ENCODE measurements at regions of chr14 and their contacts with region 1.

Region 1: GRCh38 chr14:63852817-63853731 is at the start of gene SYNE2:
- DNase-seq: peak; percentile 84
- H3K4me3 Mint-ChIP-seq: peak within 1 kb of the TSS; percentile 97
- H3K27ac Mint-ChIP-seq: peak within 1 kb of the TSS; percentile 91
- H3K4me1 Mint-ChIP-seq: peaks cover 44% of the 10 kb centered on the region
- H3K27me3 Mint-ChIP-seq: peaks cover 10% of the 10 kb centered on the region
- total RNA-seq, gene SYNE2: 77.7 to 82.4 TPM

Region 2: DNA sequence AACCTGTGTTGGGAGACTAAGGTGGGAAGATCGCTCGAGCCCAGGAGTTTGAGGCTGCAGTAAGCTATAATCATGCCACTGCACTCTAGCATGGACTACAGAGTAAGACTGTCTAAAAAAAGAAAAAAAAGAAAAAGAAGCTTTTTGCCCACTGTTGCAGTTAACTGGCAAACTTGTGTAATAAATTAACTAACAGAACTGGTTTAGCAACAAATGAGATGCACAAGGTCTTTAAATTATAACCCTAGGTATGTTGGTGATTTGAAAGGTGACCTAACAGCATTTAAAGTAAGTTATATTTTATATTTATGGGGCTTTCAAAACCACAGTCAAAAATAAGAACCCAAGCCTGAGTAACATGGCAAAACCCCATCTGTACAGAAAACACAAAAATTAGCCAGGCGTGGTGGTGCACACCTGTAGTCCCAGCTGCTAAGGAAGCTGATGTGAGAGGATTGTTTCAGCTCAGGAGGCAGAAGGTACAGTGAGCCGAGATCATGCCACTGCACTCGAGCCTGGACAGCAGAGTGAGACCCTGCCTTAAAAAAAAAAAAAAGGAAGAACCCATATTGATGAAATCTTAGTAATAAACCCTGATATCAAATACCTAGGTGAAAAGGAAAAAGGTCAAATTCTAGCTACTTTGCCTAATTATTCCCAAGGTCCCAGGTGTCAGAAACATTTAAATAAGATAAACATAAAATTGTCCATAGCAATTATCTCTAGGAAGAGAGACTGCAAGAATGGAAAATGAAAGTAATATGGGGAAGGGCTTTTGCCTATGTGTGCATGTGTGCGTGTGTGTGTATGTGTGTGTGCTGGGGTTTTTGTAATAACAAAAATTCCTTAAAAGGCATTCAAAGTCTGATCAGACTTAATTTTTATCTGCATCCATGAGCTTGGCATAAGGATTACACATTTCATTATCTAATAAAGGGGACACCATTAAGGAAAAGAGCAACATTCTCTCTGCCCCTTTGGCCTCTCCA is 15.2 kb after region 1 on chr14:
- CTCF ChIA-PET with region 1: interaction called, 21 read pairs
- POLR2A ChIA-PET with region 1: interaction called, 178 read pairs
- DNase-seq: no peak
- H3K4me3 Mint-ChIP-seq: peak overlapping the region; percentile 6
- H3K27ac Mint-ChIP-seq: peak overlapping the region; percentile 3
- H3K4me1 Mint-ChIP-seq: peaks cover 58% of the 10 kb centered on the region
- H3K27me3 Mint-ChIP-seq: no peaks in the 10 kb centered on the region

Region 3: DNA sequence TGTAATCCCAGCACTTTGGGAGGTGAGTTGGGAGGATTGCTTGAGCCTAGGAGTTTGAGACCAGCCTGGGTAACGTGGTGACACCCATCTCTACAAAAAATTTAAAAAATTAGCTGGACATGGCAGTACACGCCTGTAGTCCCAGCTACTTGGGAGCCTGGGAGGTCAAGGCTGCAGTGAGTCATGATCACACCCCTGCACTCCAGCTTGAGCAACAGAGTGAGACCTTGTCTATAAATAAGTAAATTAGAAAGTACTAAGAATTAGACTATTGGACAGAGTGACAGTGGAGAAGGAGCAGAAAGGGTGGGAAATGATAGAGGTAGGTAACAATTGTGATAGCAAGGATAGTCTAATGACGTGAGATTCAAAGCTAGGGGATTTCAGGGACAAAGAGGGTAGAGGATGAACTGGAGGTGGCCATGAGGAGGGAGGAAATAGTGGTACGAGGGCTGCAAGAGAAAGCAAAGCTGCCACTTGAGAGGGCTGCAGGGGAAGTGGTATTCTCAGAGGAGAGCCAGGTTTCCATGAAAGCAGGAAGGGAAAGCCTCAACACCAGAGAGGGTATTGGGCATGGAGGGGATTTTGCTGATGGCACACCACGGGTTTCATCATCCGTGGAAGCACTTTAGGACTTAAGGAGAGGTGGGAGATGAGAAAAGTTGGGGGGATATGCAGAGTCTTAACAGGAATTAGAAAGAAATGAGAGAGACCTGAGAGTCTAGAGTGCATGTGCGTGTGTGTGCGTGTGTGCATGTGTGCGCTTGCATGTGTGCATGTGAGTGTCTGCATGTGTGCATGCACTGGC is 85.3 kb after region 1 on chr14:
- CTCF ChIA-PET with region 1: interaction called, 4 read pairs
- POLR2A ChIA-PET with region 1: interaction called, 16 read pairs
- DNase-seq: peak; percentile 61
- H3K4me3 Mint-ChIP-seq: no peak overlapping the region
- H3K27ac Mint-ChIP-seq: no peak overlapping the region
- H3K4me1 Mint-ChIP-seq: peaks cover 44% of the 10 kb centered on the region
- H3K27me3 Mint-ChIP-seq: no peaks in the 10 kb centered on the region

Measured in activated CD4-positive, alpha-beta memory T cell treated with anti-CD3 and anti-CD28 coated beads, Interleukin-2, amount 10 ng/mL, durations not matched to agents 7 days and 5 days (primary cell).